Activated naive CD4-positive, alpha-beta T cell treated with anti-CD3 and anti-CD28 coated beads for 36 hours (primary cell): ENCODE measurements at regions of chr3 and their contacts with region 1.

Region 1: GRCh38 chr3:51799879-51800749 is 21.1 kb upstream of the IQCF6 start:
- DNase-seq: peak; percentile 35
- H3K4me3 Mint-ChIP-seq: no peak overlapping the region
- H3K27ac Mint-ChIP-seq: no peak overlapping the region
- H3K4me1 Mint-ChIP-seq: peaks cover 22% of the 10 kb centered on the region
- H3K27me3 Mint-ChIP-seq: peaks cover 5% of the 10 kb centered on the region

Region 2: GRCh38 chr3:51630513-51630912 is 169.6 kb before region 1 on chr3:
- CTCF ChIA-PET with region 1: no interaction called
- intact Hi-C with region 1: loop called (anchors 5 kb)
- DNase-seq: no peak
- H3K4me3 Mint-ChIP-seq: no peak overlapping the region
- H3K27ac Mint-ChIP-seq: no peak overlapping the region
- H3K4me1 Mint-ChIP-seq: no peaks in the 10 kb centered on the region
- H3K27me3 Mint-ChIP-seq: no peaks in the 10 kb centered on the region

Region 3: GRCh38 chr3:51710641-51711351 is 89.3 kb before region 1 on chr3:
- CTCF ChIA-PET with region 1: interaction called, 10 read pairs
- intact Hi-C with region 1: no loop called
- DNase-seq: peak; percentile 23
- H3K4me3 Mint-ChIP-seq: no peak overlapping the region
- H3K27ac Mint-ChIP-seq: no peak overlapping the region
- H3K4me1 Mint-ChIP-seq: peaks cover 12% of the 10 kb centered on the region
- H3K27me3 Mint-ChIP-seq: no peaks in the 10 kb centered on the region

Region 4: GRCh38 chr3:52907497-52907896 is 1107.4 kb after region 1 on chr3:
- CTCF ChIA-PET with region 1: no interaction called
- intact Hi-C with region 1: no loop called
- DNase-seq: no peak
- H3K4me3 Mint-ChIP-seq: no peak overlapping the region
- H3K27ac Mint-ChIP-seq: no peak overlapping the region
- H3K4me1 Mint-ChIP-seq: no peaks in the 10 kb centered on the region
- H3K27me3 Mint-ChIP-seq: no peaks in the 10 kb centered on the region